Caco-2 (cell line): ENCODE measurements at regions of chr10 and their contacts with region 1.

Region 1: GRCh38 chr10:6401562-6402348 is 178.3 kb downstream of the PRKCQ start:
- DNase-seq: peak; percentile 89
- H3K4me3 ChIP-seq: peak overlapping the region; percentile 40
- H3K4me3 Mint-ChIP-seq: peak overlapping the region; percentile 85
- H3K27ac Mint-ChIP-seq: peak overlapping the region; percentile 87
- H3K4me1 ChIP-seq: 0 out of 2 replicates have a peak, but pooled peaks cover 4% of the 10 kb centered on the region
- H3K4me1 Mint-ChIP-seq: peaks cover 9% of the 10 kb centered on the region
- H3K27me3 ChIP-seq: 0 out of 2 replicates have a peak, but pooled peaks cover 1% of the 10 kb centered on the region
- H3K27me3 Mint-ChIP-seq: peaks cover 17% of the 10 kb centered on the region
- CTCF ChIP-seq: peak; percentile 89 to 90

Region 2: GRCh38 chr10:5948999-5949759 is 452.6 kb before region 1 on chr10:
- CTCF ChIA-PET with region 1: interaction called, 3 read pairs
- POLR2A ChIA-PET with region 1: no interaction called
- intact Hi-C with region 1: loop called (anchors 5 kb)
- DNase-seq: peak; percentile 74 to 75
- H3K4me3 ChIP-seq: no peak overlapping the region
- H3K4me3 Mint-ChIP-seq: no peak overlapping the region
- H3K27ac Mint-ChIP-seq: no peak overlapping the region
- H3K4me1 ChIP-seq: peaks cover 3% of the 10 kb centered on the region; the same call in 1 of the 2 replicates
- H3K4me1 Mint-ChIP-seq: peaks cover 11% of the 10 kb centered on the region
- H3K27me3 ChIP-seq: no peaks in the 10 kb centered on the region
- H3K27me3 Mint-ChIP-seq: no peaks in the 10 kb centered on the region
- CTCF ChIP-seq: peak; percentile 41 to 82

Region 3: GRCh38 chr10:6088721-6089390 is 312.9 kb before region 1 on chr10 and contains the start of gene RBM17:
- CTCF ChIA-PET with region 1: interaction called, 19 read pairs
- POLR2A ChIA-PET with region 1: no interaction called
- intact Hi-C with region 1: loop called (anchors 1 kb)
- DNase-seq: peak; percentile 97 to 99
- H3K4me3 ChIP-seq: peak within 1 kb of the TSS; percentile 97
- H3K4me3 Mint-ChIP-seq: peak within 1 kb of the TSS; percentile 86
- H3K27ac Mint-ChIP-seq: peak within 1 kb of the TSS; percentile 80
- H3K4me1 ChIP-seq: no peaks in the 10 kb centered on the region
- H3K4me1 Mint-ChIP-seq: peaks cover 41% of the 10 kb centered on the region
- H3K27me3 ChIP-seq: no peaks in the 10 kb centered on the region; the same call in 1 of the 2 replicates
- H3K27me3 Mint-ChIP-seq: peaks cover 14% of the 10 kb centered on the region
- CTCF ChIP-seq: peak; percentile 100
- total RNA-seq, gene RBM17: 286 and 290 TPM in 2 replicates

Region 4: GRCh38 chr10:6135039-6135438 is 266.7 kb before region 1 on chr10:
- CTCF ChIA-PET with region 1: interaction called, 10 read pairs
- POLR2A ChIA-PET with region 1: interaction called, 3 read pairs
- intact Hi-C with region 1: no loop called
- DNase-seq: no peak
- H3K4me3 ChIP-seq: no peak overlapping the region
- H3K4me3 Mint-ChIP-seq: no peak overlapping the region
- H3K27ac Mint-ChIP-seq: no peak overlapping the region
- H3K4me1 ChIP-seq: no peaks in the 10 kb centered on the region
- H3K4me1 Mint-ChIP-seq: no peaks in the 10 kb centered on the region
- H3K27me3 ChIP-seq: no peaks in the 10 kb centered on the region
- H3K27me3 Mint-ChIP-seq: peaks cover 15% of the 10 kb centered on the region
- CTCF ChIP-seq: no peak

Region 5: GRCh38 chr10:6163364-6164270 is 238.1 kb before region 1 on chr10:
- CTCF ChIA-PET with region 1: interaction called, 19 read pairs
- POLR2A ChIA-PET with region 1: interaction called, 4 read pairs
- intact Hi-C with region 1: no loop called
- DNase-seq: peak; percentile 90 to 98
- H3K4me3 ChIP-seq: peak overlapping the region; percentile 97
- H3K4me3 Mint-ChIP-seq: peak overlapping the region; percentile 88
- H3K27ac Mint-ChIP-seq: peak overlapping the region; percentile 98
- H3K4me1 ChIP-seq: peaks cover 20% of the 10 kb centered on the region
- H3K4me1 Mint-ChIP-seq: peaks cover 43% of the 10 kb centered on the region
- H3K27me3 ChIP-seq: no peaks in the 10 kb centered on the region
- H3K27me3 Mint-ChIP-seq: no peaks in the 10 kb centered on the region
- CTCF ChIP-seq: no peak

Region 6: DNA sequence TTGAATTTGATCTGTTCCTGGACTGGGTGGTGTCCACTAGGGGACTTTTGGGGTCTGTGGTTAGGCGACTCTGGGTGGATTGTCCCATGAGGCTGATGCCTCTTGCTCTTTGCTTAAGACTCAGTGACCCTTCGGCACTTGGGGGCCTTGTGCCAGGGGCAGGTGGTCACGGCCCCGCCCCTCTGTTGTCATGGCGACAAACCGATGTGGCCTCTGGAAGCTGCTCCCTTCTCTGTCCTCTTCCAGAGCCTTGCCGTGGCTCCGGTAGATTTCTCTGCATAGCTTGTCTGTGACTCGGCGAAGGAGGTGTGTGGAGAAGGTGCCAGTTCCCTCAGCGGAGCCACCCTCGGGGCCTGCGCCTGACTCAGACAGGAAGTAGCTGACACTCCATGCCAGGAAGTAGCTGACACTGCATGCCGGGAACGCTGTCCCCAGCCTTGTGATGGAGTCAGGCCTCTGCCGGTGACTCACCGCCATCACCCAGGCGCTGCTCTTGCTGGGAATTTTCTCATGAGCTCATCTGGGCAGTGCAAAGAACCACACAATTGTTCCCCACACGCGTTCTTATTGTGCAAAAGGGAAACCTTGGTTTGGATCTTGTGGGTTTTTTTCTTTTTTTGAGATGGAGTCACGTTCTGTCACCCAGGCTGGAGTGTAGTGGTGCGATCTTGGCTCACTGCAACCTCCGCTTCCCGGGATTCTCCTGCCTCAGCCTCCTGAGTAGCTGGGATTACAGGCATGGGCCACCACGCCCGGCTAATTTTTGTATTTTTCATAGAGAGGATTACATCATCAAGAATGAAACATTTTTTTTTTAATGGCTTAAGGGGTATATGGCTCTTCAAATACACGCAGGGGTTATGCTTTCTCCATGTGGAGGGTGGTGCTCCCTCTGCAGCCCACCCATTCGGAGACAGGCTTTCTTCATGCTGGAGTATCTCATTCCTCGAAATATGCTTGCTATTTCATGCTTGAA is 126.4 kb before region 1 on chr10:
- CTCF ChIA-PET with region 1: interaction called, 18 read pairs
- POLR2A ChIA-PET with region 1: no interaction called
- intact Hi-C with region 1: loop called (anchors 1 kb)
- DNase-seq: peak; percentile 57 to 82
- H3K4me3 ChIP-seq: no peak overlapping the region
- H3K4me3 Mint-ChIP-seq: peak overlapping the region; percentile 66
- H3K27ac Mint-ChIP-seq: peak overlapping the region; percentile 51
- H3K4me1 ChIP-seq: peaks cover 35% of the 10 kb centered on the region
- H3K4me1 Mint-ChIP-seq: peaks cover 20% of the 10 kb centered on the region
- H3K27me3 ChIP-seq: no peaks in the 10 kb centered on the region
- H3K27me3 Mint-ChIP-seq: no peaks in the 10 kb centered on the region
- CTCF ChIP-seq: no peak

Region 7: DNA sequence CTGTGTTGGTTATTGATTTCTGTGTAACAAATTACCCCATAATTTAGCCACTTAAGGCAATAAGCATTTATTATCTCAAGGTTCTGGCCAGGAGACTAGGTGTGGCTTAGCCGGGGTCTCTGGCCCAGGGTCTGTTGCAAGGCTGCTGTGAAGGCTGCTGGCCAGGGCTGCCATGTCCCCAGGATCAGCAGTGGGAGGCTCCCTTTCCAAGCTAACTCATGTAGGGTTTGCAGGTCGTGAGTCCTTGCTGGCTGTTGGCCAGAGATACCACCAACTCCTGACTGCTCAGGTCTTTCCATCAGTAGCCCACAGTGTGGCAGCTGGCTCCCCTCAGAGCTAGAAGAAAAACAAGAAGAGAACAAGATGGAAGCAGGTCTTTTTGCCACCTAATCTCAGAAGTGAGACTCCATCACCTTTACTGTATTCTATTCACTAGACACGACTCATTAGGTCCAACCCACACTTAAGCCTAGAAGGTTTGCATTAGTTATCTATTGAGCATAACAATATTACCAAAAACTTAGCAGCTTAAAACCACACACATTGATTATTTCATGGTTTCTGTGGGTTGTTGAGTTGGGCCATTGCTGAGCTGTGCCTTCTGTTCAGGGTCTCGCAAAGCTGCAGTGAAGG is 13.4 kb before region 1 on chr10:
- CTCF ChIA-PET with region 1: interaction called, 10 read pairs
- POLR2A ChIA-PET with region 1: interaction called, 3 read pairs
- intact Hi-C with region 1: no loop called
- DNase-seq: no peak
- H3K4me3 ChIP-seq: no peak overlapping the region
- H3K4me3 Mint-ChIP-seq: no peak overlapping the region
- H3K27ac Mint-ChIP-seq: no peak overlapping the region
- H3K4me1 ChIP-seq: no peaks in the 10 kb centered on the region
- H3K4me1 Mint-ChIP-seq: no peaks in the 10 kb centered on the region
- H3K27me3 ChIP-seq: no peaks in the 10 kb centered on the region
- H3K27me3 Mint-ChIP-seq: no peaks in the 10 kb centered on the region
- CTCF ChIP-seq: no peak

Region 8: GRCh38 chr10:6431861-6432260 is 30.1 kb after region 1 on chr10:
- CTCF ChIA-PET with region 1: no interaction called
- POLR2A ChIA-PET with region 1: no interaction called
- intact Hi-C with region 1: no loop called
- DNase-seq: no peak
- H3K4me3 ChIP-seq: no peak overlapping the region
- H3K4me3 Mint-ChIP-seq: no peak overlapping the region
- H3K27ac Mint-ChIP-seq: no peak overlapping the region
- H3K4me1 ChIP-seq: no peaks in the 10 kb centered on the region
- H3K4me1 Mint-ChIP-seq: no peaks in the 10 kb centered on the region
- H3K27me3 ChIP-seq: no peaks in the 10 kb centered on the region
- H3K27me3 Mint-ChIP-seq: peaks cover 12% of the 10 kb centered on the region
- CTCF ChIP-seq: no peak